Thyroid gland (tissue), 4 donors: ENCODE measurements at regions of chr15 and their contacts with region 1.

Region 1: GRCh38 chr15:23039151-23039916 is at the start of gene TUBGCP5:
- DNase-seq: peak; percentile 98
- H3K4me3 ChIP-seq: peak within 1 kb of the TSS; percentile 31 to 90 (median 73)
- H3K27ac ChIP-seq: peak within 1 kb of the TSS; percentile 5 to 67 (median 28)
- H3K4me1 ChIP-seq: peaks cover 4 to 7% of the 10 kb centered on the region in 2 donors
- H3K27me3 ChIP-seq: no peaks in the 10 kb centered on the region
- CTCF ChIP-seq: peak in 5 of 6 experiments; percentile 24 to 66 (median 57)
- POLR2A ChIP-seq: peak; percentile 10 to 89
- total RNA-seq, gene TUBGCP5: 21.9 to 48.4 (median 24.8) TPM

Region 2: DNA sequence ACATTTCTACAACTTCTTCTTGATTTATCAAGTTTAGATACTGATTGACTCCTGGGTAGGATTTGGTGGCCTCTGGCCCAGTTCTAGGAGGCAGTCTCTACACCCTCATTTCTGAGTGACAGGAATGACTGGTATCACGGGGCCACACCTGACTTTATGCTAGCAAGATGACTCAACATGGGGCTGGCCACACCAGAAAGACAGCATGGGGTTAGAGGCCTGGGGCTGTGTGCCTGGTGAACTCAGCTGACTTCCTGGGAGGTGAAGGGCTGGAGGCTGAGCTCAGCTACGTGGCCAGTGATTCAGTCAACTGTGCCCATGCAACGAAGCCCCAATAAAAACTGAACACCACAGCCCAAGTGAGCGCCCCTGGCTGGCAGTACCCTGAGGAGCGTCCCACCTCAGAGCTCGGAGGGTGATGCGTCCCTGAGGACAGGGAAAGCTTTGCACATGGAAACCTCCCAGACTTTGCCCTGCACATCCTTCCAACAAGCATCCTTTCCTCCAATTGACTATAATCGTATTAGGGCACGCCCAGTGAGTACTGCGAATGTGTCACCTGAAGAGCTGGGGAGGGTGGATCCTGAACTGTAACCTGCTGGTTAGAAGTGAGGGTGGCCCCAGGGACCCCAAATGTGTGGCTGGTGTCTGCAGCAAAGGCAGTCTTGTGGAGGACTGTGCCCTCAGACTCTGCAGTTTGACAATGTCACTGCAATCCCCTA is 143.7 kb before region 1 on chr15:
- intact Hi-C with region 1: no loop called
- DNase-seq: no peak
- H3K4me3 ChIP-seq: no peak overlapping the region
- H3K27ac ChIP-seq: no peak overlapping the region
- H3K4me1 ChIP-seq: no peaks in the 10 kb centered on the region
- H3K27me3 ChIP-seq: no peaks in the 10 kb centered on the region
- CTCF ChIP-seq: no peak
- POLR2A ChIP-seq: no peak

Region 3: DNA sequence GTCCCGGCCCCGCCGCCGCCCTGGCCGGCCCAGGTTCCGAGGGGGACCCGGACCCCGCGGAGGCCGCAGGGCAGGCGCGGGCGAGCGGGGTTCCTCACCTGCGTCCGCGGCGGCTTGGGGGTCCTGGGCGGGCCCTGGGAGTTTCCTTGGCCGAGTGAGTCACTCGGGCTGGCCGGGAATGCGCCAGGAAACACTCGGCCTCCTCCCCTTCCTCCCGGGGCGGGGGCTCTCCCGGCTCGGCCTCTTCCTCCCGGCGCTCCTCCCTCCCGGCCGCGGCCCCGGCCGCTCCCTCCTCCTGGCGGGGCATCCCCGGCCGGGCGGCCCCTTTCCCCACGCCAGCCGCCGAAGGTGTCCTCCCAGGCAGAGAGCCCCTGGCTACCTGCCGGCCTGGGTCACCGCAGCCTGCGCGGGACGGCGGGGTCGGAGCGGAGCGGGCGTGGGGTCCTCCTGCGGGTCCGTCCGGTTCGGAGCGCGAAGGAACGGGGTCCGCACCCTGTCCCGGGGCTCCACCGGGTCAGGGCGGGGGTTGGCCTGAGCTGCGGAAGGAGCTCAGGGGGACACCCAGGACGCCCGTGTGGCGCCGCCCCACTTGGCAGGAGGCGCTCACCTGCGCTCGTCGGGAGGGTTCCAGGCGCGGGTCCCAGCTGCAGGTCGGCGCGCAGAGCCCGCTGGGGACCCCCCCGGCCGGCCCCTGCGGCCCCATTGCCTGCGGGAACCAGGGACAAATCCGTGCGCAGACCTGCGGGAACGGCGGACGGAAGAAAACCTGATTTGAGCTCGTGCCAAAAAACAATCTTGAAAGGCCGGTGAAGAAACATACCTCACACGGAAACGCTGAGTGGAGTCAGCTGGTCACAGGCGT is 58.9 kb before region 1 on chr15 and contains the start of gene CYFIP1:
- intact Hi-C with region 1: loop called (anchors 5 kb)
- DNase-seq: peak; percentile 86 to 89
- H3K4me3 ChIP-seq: peak within 1 kb of the TSS; percentile 76 to 98 (median 90)
- H3K27ac ChIP-seq: peak within 1 kb of the TSS; percentile 75 to 89 (median 84)
- H3K4me1 ChIP-seq: peaks cover 6 to 12% of the 10 kb centered on the region in 2 donors
- H3K27me3 ChIP-seq: no peaks in the 10 kb centered on the region
- CTCF ChIP-seq: no peak
- POLR2A ChIP-seq: peak in 1 of 2 donors; percentile 74
- total RNA-seq, gene CYFIP1: 89.1 to 138 (median 131) TPM

Region 4: GRCh38 chr15:23003736-23004135 is 35.6 kb before region 1 on chr15:
- intact Hi-C with region 1: no loop called
- DNase-seq: no peak
- H3K4me3 ChIP-seq: no peak overlapping the region
- H3K27ac ChIP-seq: no peak overlapping the region
- H3K4me1 ChIP-seq: no peaks in the 10 kb centered on the region
- H3K27me3 ChIP-seq: no peaks in the 10 kb centered on the region
- CTCF ChIP-seq: no peak
- POLR2A ChIP-seq: no peak